Endothelial cell of umbilical vein (primary cell): ENCODE measurements at regions of chr1 and their contacts with region 1.

Region 1: DNA sequence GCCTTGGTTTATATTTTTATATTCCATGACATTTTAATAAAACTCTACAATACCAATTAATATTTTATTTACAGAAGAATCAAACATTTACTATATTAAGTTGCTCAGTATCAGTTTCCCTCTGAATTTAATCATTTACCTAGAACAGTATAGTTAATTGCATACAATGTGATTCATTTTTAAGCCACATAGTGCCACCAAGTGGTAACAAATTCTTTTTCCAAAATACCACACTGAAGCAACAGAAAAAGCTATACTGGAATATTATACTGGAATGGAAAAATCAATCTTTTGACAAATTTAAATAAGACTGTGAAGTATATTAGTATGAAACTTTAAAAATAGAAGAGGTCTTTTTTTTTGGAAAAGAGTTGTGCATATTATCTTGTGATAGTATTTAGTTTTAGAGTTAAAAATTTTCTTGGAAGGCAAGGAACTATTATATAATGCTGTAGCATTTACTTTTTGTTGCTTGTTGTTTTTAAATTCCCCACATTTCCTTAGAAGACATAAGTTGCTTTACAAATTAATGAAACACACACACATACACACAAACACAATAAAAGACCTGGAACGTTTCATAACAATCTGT is 57.3 kb downstream of the ZNF644 start:
- DNase-seq: peak; percentile 45
- H3K4me3 ChIP-seq: no peak overlapping the region
- H3K27ac ChIP-seq: no peak overlapping the region
- H3K4me1 ChIP-seq: peaks cover 3% of the 10 kb centered on the region
- H3K27me3 ChIP-seq: no peaks in the 10 kb centered on the region
- CTCF ChIP-seq: peak; percentile 9 to 11
- POLR2A ChIP-seq: no peak

Region 2: GRCh38 chr1:90045853-90046563 is 918.5 kb before region 1 on chr1:
- CTCF ChIA-PET with region 1: no interaction called
- POLR2A ChIA-PET with region 1: no interaction called
- dilution Hi-C with region 1: no loop called
- intact Hi-C with region 1: loop called (anchors 2 kb)
- DNase-seq: peak; percentile 35
- H3K4me3 ChIP-seq: no peak overlapping the region
- H3K27ac ChIP-seq: no peak overlapping the region
- H3K4me1 ChIP-seq: no peaks in the 10 kb centered on the region
- H3K27me3 ChIP-seq: peaks cover 8 to 23% of the 10 kb centered on the region in 2 experiments
- CTCF ChIP-seq: peak; percentile 57 to 65
- POLR2A ChIP-seq: no peak

Region 3: DNA sequence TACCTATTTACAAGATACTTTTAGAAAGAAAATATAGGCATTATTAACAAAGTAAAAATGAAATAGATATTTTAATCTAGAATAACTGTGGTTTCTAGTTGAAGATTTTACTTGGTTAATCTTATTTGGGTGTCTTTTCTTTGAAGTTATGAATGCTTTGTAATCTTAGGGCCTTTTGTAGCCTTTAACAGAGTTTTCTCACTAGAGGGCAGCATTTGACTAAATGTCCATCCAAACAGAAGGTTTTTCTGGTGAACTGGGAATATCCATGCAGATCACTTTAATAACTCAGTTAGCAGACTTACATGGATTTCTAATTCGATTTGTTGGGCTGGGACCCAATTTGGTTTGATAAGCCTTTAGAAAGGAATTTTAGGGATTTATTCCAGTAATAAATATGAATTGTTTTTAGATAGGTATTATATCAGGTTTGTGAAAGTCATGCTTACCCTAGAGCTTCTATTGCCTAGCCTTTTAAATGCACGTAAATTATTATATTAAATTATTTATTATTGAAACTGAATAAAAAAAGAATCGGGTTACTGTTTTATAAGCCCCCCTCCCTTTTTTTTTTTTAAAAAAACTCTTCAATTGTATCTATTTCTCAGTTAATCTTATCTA is 849.9 kb before region 1 on chr1:
- CTCF ChIA-PET with region 1: interaction called, 5 read pairs
- POLR2A ChIA-PET with region 1: no interaction called
- dilution Hi-C with region 1: no loop called
- intact Hi-C with region 1: loop called (anchors 5 kb)
- DNase-seq: peak; percentile 59
- H3K4me3 ChIP-seq: no peak overlapping the region
- H3K27ac ChIP-seq: no peak overlapping the region
- H3K4me1 ChIP-seq: no peaks in the 10 kb centered on the region
- H3K27me3 ChIP-seq: peaks cover 7 to 9% of the 10 kb centered on the region in 2 experiments
- CTCF ChIP-seq: peak; percentile 34 to 52
- POLR2A ChIP-seq: no peak

Region 4: DNA sequence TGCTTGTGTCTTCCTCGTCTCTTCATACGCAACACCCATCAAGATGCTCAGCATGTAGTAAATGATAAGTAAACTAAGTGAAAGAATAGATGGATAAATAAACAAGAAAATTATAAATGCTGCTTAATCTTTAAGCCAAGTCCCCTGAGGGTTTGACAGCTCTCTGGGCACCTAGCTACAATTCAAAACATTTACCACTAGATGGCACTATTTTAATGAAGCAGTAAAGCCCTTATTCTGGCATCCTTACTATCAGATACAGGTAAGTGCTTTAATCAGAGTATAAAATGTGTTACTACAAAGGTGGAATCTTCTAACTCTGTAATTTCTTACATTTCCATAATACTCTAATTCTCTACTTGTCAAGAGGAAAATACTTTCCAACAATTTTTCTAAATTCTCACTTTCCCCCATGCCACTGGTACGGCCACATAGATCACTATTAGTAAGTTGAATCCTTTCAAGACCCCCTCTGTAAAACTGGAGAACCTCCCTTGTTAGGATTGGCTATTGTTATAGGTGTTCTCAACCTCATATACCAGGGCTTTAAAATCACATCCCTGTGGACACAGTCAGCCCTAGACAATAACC is 385.2 kb before region 1 on chr1:
- CTCF ChIA-PET with region 1: interaction called, 28 read pairs
- POLR2A ChIA-PET with region 1: no interaction called
- dilution Hi-C with region 1: no loop called
- intact Hi-C with region 1: loop called (anchors 5 kb)
- DNase-seq: peak; percentile 51
- H3K4me3 ChIP-seq: no peak overlapping the region
- H3K27ac ChIP-seq: no peak overlapping the region
- H3K4me1 ChIP-seq: no peaks in the 10 kb centered on the region
- H3K27me3 ChIP-seq: no peaks in the 10 kb centered on the region
- CTCF ChIP-seq: peak; percentile 36 to 46
- POLR2A ChIP-seq: no peak

Region 5: GRCh38 chr1:90721210-90722194 is 243.0 kb before region 1 on chr1:
- CTCF ChIA-PET with region 1: interaction called, 74 read pairs
- POLR2A ChIA-PET with region 1: interaction called, 3 read pairs
- dilution Hi-C with region 1: no loop called
- intact Hi-C with region 1: loop called (anchors 1 kb)
- DNase-seq: peak; percentile 75
- H3K4me3 ChIP-seq: no peak overlapping the region
- H3K27ac ChIP-seq: no peak overlapping the region
- H3K4me1 ChIP-seq: peaks cover 2% of the 10 kb centered on the region
- H3K27me3 ChIP-seq: peaks cover 85 to 97% of the 10 kb centered on the region in 2 experiments
- CTCF ChIP-seq: peak; percentile 87 to 96
- POLR2A ChIP-seq: no peak

Region 6: DNA sequence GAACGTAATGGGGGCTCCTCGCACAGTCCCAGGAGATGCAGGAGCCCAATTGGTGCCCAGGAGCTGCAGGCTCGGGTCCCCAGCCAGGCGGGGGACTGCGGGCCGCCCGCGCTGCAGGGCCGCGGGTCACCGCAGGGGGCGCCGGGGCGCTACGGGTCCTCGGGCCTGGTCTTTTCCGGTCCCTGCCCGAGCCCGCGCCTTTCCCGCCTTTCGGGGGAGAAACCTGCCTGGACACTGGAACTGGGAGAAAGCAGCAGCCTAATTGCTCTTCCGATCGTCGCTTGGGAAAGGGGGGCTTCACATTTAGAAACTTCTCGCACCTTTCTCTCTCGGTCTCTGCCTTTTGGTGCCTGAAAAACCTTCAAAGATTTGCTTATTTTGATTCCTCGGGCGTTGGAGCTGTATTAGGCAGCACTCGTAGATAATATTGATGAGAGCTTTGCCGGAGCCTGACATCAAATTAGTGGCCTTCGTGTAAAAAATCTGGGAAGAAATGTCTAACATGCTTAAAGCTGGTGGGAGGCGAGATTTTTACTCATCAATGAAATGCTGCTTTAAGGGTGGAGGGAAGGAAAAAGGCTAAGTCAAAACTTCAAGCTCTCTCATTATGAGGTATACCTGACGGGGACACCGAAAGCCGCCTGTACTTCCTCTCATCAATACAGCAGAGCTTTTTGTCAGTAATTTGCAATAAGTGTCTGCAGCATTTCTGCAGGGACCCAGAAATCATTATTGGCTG is 234.9 kb before region 1 on chr1:
- CTCF ChIA-PET with region 1: interaction called, 12 read pairs
- POLR2A ChIA-PET with region 1: no interaction called
- dilution Hi-C with region 1: no loop called
- intact Hi-C with region 1: no loop called
- DNase-seq: no peak
- H3K4me3 ChIP-seq: no peak overlapping the region
- H3K27ac ChIP-seq: no peak overlapping the region
- H3K4me1 ChIP-seq: peaks cover 2% of the 10 kb centered on the region
- H3K27me3 ChIP-seq: peaks cover 75 to 94% of the 10 kb centered on the region in 2 experiments
- CTCF ChIP-seq: peak; percentile 38 to 43
- POLR2A ChIP-seq: no peak

Region 7: GRCh38 chr1:90925928-90926869 is 38.3 kb before region 1 on chr1:
- CTCF ChIA-PET with region 1: no interaction called
- POLR2A ChIA-PET with region 1: no interaction called
- dilution Hi-C with region 1: no loop called
- intact Hi-C with region 1: no loop called
- DNase-seq: no peak
- H3K4me3 ChIP-seq: no peak overlapping the region
- H3K27ac ChIP-seq: no peak overlapping the region
- H3K4me1 ChIP-seq: no peaks in the 10 kb centered on the region
- H3K27me3 ChIP-seq: no peaks in the 10 kb centered on the region
- CTCF ChIP-seq: no peak
- POLR2A ChIP-seq: no peak

Region 8: GRCh38 chr1:90943966-90944365 is 20.6 kb before region 1 on chr1:
- CTCF ChIA-PET with region 1: interaction called, 10 read pairs
- POLR2A ChIA-PET with region 1: no interaction called
- dilution Hi-C with region 1: no loop called
- intact Hi-C with region 1: no loop called
- DNase-seq: no peak
- H3K4me3 ChIP-seq: no peak overlapping the region
- H3K27ac ChIP-seq: no peak overlapping the region
- H3K4me1 ChIP-seq: no peaks in the 10 kb centered on the region
- H3K27me3 ChIP-seq: no peaks in the 10 kb centered on the region
- CTCF ChIP-seq: no peak
- POLR2A ChIP-seq: no peak